H1 (cell line): ENCODE measurements at regions of chr12 and their contacts with region 1.

Region 1: GRCh38 chr12:109428037-109428629 is 49.0 kb downstream of the KCTD10 start:
- DNase-seq: peak; percentile 73 to 87
- H3K4me3 ChIP-seq: no peak overlapping the region
- H3K27ac ChIP-seq: no peak overlapping the region
- H3K4me1 ChIP-seq: peaks cover 0 to 2% (median 0%) of the 10 kb centered on the region in 4 experiments; a peak in 1 of 7 replicates
- H3K27me3 ChIP-seq: no peaks in the 10 kb centered on the region
- CTCF ChIP-seq: peak; percentile 91 to 97 (median 93)
- EP300 ChIP-seq: no peak
- POLR2A ChIP-seq: no peak
- RAD21 ChIP-seq: peak; percentile 84 to 89

Region 2: GRCh38 chr12:109247831-109248654 is 180.1 kb before region 1 on chr12:
- CTCF ChIA-PET with region 1: no interaction called
- POLR2A ChIA-PET with region 1: no interaction called
- DNase-seq: no peak
- H3K4me3 ChIP-seq: no peak overlapping the region
- H3K27ac ChIP-seq: no peak overlapping the region
- H3K4me1 ChIP-seq: no peaks in the 10 kb centered on the region
- H3K27me3 ChIP-seq: 0 out of 7 replicates have a peak, but pooled peaks cover 0 to 2% (median 0%) of the 10 kb centered on the region in 4 experiments
- CTCF ChIP-seq: no peak
- EP300 ChIP-seq: no peak
- POLR2A ChIP-seq: no peak
- RAD21 ChIP-seq: no peak

Region 3: DNA sequence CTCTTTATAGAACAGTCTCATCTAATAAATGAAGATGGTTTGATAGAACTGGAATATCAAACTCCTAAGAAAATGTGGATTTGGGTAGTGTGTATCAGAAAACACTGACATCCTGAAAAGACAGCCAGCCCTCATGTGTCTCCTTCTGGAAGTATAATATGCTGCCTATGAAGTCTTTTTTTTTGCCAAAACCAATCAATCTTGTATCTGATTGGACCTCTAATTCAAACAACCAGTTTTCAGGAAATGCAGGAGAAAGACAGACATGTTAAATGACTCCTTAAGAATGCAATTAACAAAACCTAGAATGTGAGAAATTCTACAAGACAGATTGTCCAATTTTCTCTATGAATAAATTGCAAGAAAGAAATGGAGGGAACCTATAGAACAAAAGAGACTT is 46.1 kb before region 1 on chr12:
- CTCF ChIA-PET with region 1: no interaction called
- POLR2A ChIA-PET with region 1: no interaction called
- DNase-seq: no peak
- H3K4me3 ChIP-seq: no peak overlapping the region
- H3K27ac ChIP-seq: no peak overlapping the region
- H3K4me1 ChIP-seq: peaks cover 0 to 2% (median 0%) of the 10 kb centered on the region in 4 experiments; a peak in 2 of 7 replicates
- H3K27me3 ChIP-seq: no peaks in the 10 kb centered on the region
- CTCF ChIP-seq: no peak
- EP300 ChIP-seq: no peak
- POLR2A ChIP-seq: no peak
- RAD21 ChIP-seq: no peak

Region 4: DNA sequence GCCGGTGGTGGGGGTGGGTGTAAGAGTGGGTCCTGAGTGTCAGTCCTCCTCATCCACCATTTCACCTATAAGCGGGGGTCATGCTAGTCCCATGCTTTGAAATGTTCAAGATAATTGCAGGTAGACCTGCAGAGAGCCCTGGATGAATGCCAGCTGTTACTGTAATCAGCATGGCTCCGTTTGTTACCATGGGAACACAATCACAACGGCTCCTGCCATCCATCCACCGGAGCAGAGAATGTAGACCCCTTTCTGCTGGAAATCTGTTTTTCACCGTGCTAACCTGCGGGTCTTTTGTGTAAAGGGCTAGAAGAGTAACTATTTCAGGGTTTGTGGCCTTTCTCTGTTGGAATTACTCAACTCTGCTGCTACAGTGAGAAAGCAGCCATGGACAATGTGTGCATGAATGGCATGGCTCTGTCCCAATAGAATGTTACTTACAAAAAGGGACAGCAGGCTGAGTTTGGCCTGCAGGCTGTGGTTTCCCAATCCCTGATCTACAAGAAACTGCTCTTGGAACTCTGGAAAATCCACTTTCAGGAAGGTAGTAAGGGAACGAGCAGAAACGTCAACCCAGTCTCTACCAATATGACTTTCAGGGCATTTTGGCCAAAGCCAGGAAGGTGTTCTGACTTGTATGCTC is 12.8 kb after region 1 on chr12:
- CTCF ChIA-PET with region 1: interaction called, 181 read pairs
- POLR2A ChIA-PET with region 1: interaction called, 9 read pairs
- DNase-seq: no peak
- H3K4me3 ChIP-seq: no peak overlapping the region
- H3K27ac ChIP-seq: peak overlapping the region; percentile 63; the same call in 1 of the 2 replicates
- H3K4me1 ChIP-seq: peaks cover 2 to 14% (median 8%) of the 10 kb centered on the region in 4 experiments; a peak in 6 of 7 replicates
- H3K27me3 ChIP-seq: no peaks in the 10 kb centered on the region
- CTCF ChIP-seq: no peak
- EP300 ChIP-seq: no peak
- POLR2A ChIP-seq: no peak
- RAD21 ChIP-seq: no peak

Region 5: GRCh38 chr12:109462710-109463692 is 34.9 kb after region 1 on chr12:
- CTCF ChIA-PET with region 1: interaction called, 245 read pairs
- POLR2A ChIA-PET with region 1: interaction called, 6 read pairs
- DNase-seq: no peak
- H3K4me3 ChIP-seq: peak overlapping the region in 1 of 4 experiments; percentile 10; a peak in 2 of 8 replicates
- H3K27ac ChIP-seq: peak overlapping the region; percentile 6; the same call in 1 of the 2 replicates
- H3K4me1 ChIP-seq: peaks cover 41 to 64% (median 49%) of the 10 kb centered on the region in 4 experiments
- H3K27me3 ChIP-seq: no peaks in the 10 kb centered on the region
- CTCF ChIP-seq: no peak
- EP300 ChIP-seq: no peak; a peak in 1 of 3 replicates
- POLR2A ChIP-seq: no peak
- RAD21 ChIP-seq: no peak

Region 6: GRCh38 chr12:109477185-109477962 is 49.2 kb after region 1 on chr12 and contains the starts of genes KCTD10 and UBE3B:
- CTCF ChIA-PET with region 1: interaction called, 245 read pairs
- POLR2A ChIA-PET with region 1: interaction called, 3 read pairs
- DNase-seq: peak in 1 of 2 experiments; percentile 93
- H3K4me3 ChIP-seq: peak within 1 kb of the TSS; percentile 92 to 97 (median 94)
- H3K27ac ChIP-seq: peak within 1 kb of the TSS; percentile 98
- H3K4me1 ChIP-seq: peaks cover 0 to 10% (median 5%) of the 10 kb centered on the region in 4 experiments; a peak in 4 of 7 replicates
- H3K27me3 ChIP-seq: no peaks in the 10 kb centered on the region
- CTCF ChIP-seq: no peak
- EP300 ChIP-seq: no peak
- POLR2A ChIP-seq: peak; percentile 23 to 72
- RAD21 ChIP-seq: no peak; a peak in 2 of 4 replicates
- total RNA-seq, gene KCTD10: 52.4 and 54.3 TPM in 2 replicates
- total RNA-seq, gene UBE3B: 21.1 and 21.8 TPM in 2 replicates

Region 7: DNA sequence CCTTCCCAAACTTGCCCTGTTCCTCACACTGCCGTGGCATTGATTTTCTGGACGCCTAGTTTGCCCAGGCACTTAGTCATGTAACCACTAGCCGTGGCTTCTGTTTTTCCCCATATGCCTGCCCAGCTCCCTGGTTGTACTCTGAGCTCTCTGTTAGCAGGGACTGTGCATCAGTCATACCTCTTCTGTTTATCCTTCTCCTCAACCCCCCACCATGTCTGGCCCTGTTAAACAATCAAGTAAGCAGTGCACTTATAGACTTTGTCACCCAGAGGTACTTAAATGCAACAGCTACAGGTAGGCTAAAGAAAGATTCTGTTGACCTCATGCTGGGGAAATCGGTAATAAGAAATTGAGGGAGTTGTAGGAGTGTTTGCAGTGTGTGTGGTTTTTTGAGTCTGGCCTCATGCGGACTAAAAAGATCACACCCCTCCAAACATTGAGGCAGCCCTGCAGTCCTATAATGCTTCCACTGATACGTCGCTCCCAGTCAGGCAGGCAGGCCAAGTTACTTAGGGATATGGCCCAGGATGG is 66.3 kb after region 1 on chr12:
- CTCF ChIA-PET with region 1: interaction called, 14 read pairs
- POLR2A ChIA-PET with region 1: no interaction called
- DNase-seq: no peak
- H3K4me3 ChIP-seq: no peak overlapping the region
- H3K27ac ChIP-seq: no peak overlapping the region
- H3K4me1 ChIP-seq: no peaks in the 10 kb centered on the region
- H3K27me3 ChIP-seq: no peaks in the 10 kb centered on the region
- CTCF ChIP-seq: no peak
- EP300 ChIP-seq: no peak
- POLR2A ChIP-seq: no peak
- RAD21 ChIP-seq: no peak

Region 8: DNA sequence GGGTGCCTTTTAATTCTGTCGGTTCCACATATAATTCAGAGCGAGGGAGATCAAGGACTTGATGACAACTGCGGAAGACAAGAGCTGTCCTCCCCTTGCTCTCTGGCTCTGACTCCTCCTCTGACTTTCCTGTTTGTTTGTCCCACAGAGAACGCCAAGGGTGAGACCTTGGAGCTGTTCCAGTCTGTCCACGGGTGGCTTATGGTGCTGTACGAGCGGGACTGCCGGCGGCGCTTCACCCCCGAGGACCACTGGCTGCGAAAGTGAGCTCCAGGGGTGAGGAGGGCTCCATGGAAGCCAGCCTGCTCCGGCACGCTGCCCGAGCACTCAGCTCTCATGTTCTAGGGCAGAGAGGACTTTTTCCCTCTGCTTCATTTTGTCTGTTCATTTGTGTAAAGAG is 82.1 kb after region 1 on chr12:
- CTCF ChIA-PET with region 1: interaction called, 11 read pairs
- POLR2A ChIA-PET with region 1: no interaction called
- DNase-seq: no peak
- H3K4me3 ChIP-seq: no peak overlapping the region
- H3K27ac ChIP-seq: no peak overlapping the region
- H3K4me1 ChIP-seq: no peaks in the 10 kb centered on the region
- H3K27me3 ChIP-seq: no peaks in the 10 kb centered on the region
- CTCF ChIP-seq: no peak
- EP300 ChIP-seq: no peak
- POLR2A ChIP-seq: no peak
- RAD21 ChIP-seq: no peak